Ovary (tissue), 10 donors: ENCODE measurements at regions of chr2 and their contacts with region 1.

Region 1: GRCh38 chr2:237322564-237322963 is 91.4 kb downstream of the COL6A3 start:
- DNase-seq: no peak
- H3K4me3 ChIP-seq: no peak overlapping the region
- H3K27ac ChIP-seq: peak overlapping the region; percentile 70 to 72
- H3K4me1 ChIP-seq: peaks cover 37% of the 10 kb centered on the region
- H3K27me3 ChIP-seq: no peaks in the 10 kb centered on the region
- CTCF ChIP-seq: no peak
- EP300 ChIP-seq: no peak
- POLR2A ChIP-seq: no peak

Region 2: DNA sequence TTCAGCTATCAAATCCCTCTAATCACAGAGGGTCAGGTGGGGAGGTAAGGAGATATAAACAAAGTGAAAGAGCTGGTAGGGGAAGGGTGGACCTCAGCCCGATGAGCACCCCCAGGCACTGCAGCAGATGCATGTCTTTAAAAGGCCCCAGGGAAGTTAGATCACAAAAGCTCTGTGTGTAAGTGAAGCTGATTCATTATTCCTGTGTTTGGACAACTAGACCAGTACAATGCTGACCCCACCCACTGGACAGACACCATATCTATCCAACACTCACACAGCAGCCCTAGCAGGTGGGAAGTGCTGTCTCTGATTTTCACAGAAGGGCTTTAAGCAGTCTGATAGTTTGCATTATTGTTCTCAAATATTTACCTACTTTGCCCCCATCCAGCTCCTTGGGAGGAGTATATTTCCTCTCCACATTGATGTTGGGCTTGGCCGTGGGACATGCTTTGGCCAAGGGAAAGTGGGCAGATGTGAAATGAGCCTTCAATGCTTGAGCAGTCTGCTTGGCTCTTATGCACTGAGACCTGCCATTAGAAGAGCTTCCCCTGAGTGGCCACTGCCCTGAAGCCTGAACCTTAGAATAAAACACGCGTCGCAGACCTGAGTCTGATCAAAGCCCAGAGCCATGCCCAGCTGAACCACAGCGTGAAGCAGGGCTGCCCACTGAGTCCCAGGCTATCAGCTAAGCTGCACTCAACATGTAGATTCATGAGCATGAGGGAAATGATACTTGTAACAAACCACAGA is 125.5 kb before region 1 on chr2:
- intact Hi-C with region 1: loop called in 1 of 4 experiments (anchors 10 kb)
- DNase-seq: peak in 2 of 5 donors; percentile 11 to 26
- H3K4me3 ChIP-seq: no peak overlapping the region
- H3K27ac ChIP-seq: no peak overlapping the region
- H3K4me1 ChIP-seq: peaks cover 12% of the 10 kb centered on the region
- H3K27me3 ChIP-seq: no peaks in the 10 kb centered on the region
- CTCF ChIP-seq: no peak
- EP300 ChIP-seq: no peak
- POLR2A ChIP-seq: no peak

Region 3: DNA sequence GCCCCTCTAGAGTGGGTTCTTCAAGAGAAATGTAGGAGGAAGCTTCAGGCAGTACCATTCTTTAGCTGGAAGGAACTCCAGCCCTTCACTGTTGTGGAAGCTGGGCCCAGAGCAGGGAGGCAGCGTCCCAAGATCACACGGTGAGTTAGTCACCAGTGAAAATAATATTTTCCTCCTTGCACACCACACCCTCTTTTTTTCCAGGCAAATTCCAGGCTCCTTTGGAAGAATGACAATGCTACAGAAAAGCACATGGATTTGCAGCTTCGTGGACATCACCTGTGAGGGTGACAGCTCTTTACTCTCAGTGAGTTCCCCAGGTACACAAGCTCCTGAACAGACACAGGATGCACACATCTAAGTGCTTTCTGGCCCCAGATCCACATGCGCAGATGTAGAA is 65.7 kb before region 1 on chr2:
- intact Hi-C with region 1: loop called in 2 of 4 experiments (anchors 5 to 10 kb)
- DNase-seq: peak; percentile 61 to 77 (median 70)
- H3K4me3 ChIP-seq: no peak overlapping the region
- H3K27ac ChIP-seq: peak overlapping the region; percentile 80 to 86
- H3K4me1 ChIP-seq: peaks cover 16% of the 10 kb centered on the region
- H3K27me3 ChIP-seq: no peaks in the 10 kb centered on the region
- CTCF ChIP-seq: no peak
- EP300 ChIP-seq: no peak
- POLR2A ChIP-seq: no peak

Region 4: DNA sequence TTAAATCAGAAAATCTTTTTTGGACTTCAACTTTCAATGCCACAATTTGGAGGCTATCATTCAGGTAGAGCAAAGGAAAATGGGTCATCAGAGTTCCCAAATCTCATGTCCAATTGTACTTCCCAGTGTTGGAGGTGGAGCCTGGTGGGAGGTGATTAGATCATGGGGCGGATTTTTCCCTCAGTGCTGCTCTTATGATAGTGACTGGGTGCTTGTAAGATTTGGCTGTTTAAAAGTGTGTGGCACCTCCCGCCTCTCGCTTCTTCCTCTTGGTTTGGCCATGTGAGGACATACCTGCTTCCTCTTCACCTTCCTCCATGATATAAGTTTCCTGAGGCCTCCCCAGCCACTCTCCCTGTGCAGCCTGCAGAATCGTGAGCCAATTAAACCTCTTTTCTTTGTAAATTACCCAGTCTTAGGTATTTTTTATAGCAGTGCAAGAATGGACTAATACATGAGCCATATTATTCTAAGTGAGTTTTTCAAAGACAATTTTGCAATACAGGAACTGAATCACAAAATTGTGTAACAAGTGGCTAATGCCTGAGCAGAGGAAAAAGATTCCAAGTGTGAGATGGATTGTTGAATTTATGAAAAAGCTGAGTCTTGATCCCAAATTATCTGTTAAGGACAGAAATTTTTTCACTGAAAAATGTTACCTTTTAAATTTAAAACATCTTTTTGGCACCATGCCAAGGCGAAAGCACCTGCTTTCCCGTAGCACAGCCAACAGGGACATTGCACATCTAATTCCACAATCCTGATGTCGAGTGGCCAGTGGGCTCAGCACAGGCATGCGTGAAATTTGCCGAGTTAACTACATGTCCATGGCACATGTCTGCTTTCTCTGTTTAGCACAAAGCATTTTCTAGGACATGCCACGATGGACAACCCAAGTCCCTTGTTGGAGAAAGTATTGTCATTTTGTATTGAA is 59.5 kb before region 1 on chr2:
- intact Hi-C with region 1: loop called in 2 of 4 experiments (anchors 5 to 10 kb)
- DNase-seq: no peak
- H3K4me3 ChIP-seq: no peak overlapping the region
- H3K27ac ChIP-seq: no peak overlapping the region
- H3K4me1 ChIP-seq: peaks cover 10% of the 10 kb centered on the region
- H3K27me3 ChIP-seq: no peaks in the 10 kb centered on the region
- CTCF ChIP-seq: no peak
- EP300 ChIP-seq: no peak
- POLR2A ChIP-seq: no peak